ENCODE measurements at regions of chr18 and their contacts with region 1.

Region 1: DNA sequence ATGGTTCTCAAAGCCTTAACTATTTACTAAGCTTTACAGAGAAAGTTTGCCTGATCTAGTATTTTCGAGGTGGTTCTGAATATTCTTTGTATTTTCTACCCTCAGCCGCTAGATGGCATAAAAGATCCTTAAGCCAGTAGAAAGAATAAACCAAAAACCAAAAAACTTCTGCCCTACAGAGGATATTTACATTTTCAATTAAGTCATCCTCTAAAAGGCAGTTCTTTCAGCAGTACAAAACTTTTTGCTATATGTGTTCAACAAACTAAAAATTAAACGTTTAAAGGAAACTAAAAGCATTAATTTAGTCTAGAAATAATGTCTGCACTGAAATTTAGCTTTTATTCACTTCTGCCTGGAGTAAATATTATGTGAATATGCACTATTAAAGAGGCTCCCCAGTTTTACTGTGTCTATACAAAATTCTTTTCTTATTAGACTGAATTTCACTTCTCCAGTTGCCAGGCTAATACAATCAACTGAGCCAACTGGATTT is 297.5 kb downstream of the PIEZO2 start:
- DNase-seq: no peak
- ATAC-seq: no peak
- H3K4me3 ChIP-seq: no peak overlapping the region
- H3K27ac ChIP-seq: no peak overlapping the region
- H3K4me1 ChIP-seq: no peaks in the 10 kb centered on the region
- H3K27me3 ChIP-seq: no peaks in the 10 kb centered on the region

Region 2: GRCh38 chr18:11034884-11035283 is 183.0 kb after region 1 on chr18:
- intact Hi-C with region 1: loop called (anchors 2 to 5 kb)
- DNase-seq: no peak
- ATAC-seq: no peak
- H3K4me3 ChIP-seq: no peak overlapping the region
- H3K27ac ChIP-seq: no peak overlapping the region
- H3K4me1 ChIP-seq: no peaks in the 10 kb centered on the region
- H3K27me3 ChIP-seq: no peaks in the 10 kb centered on the region

Region 3: DNA sequence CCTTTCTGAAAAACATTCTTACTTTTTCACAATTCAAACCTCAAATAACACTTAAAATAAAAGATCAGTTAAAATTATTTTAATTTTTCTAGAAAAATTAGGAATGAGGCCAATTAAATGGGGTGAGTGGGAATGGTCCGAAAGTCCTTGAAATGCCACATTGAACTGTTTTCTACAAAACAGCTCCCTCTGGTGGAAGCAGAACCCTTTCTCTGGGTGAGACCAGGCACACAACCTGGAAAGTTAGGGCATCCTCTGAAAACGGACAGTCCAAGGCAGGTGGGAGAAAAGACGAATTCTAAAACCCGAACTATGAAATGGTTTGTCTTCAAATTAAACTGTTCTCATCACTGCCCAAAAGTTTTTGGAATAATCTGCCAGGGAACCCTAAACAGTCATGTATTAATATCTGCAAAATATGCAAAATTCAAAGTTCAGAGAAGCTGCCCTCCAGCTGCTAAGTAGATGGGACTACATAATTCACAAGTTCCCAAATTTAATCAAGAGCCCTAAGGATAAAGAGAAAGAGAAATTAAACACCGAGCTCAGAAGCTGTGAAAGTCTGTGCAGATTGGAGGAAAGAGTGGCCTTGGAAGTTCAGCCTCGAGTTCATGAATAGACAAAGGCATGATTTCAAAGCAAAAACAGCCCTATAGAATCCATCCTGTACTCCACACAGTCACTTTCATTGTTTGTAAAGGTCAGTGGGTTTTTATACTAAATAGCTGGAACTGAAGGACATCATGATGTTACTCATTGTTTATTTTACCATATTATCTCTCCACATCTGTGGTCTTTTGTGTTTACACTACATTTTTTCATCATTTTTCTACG is 189.2 kb after region 1 on chr18:
- intact Hi-C with region 1: loop called (anchors 2 to 5 kb)
- DNase-seq: no peak
- ATAC-seq: peak in 1 of 2 donors; percentile 68
- H3K4me3 ChIP-seq: no peak overlapping the region
- H3K27ac ChIP-seq: no peak overlapping the region
- H3K4me1 ChIP-seq: no peaks in the 10 kb centered on the region
- H3K27me3 ChIP-seq: no peaks in the 10 kb centered on the region

Region 4: DNA sequence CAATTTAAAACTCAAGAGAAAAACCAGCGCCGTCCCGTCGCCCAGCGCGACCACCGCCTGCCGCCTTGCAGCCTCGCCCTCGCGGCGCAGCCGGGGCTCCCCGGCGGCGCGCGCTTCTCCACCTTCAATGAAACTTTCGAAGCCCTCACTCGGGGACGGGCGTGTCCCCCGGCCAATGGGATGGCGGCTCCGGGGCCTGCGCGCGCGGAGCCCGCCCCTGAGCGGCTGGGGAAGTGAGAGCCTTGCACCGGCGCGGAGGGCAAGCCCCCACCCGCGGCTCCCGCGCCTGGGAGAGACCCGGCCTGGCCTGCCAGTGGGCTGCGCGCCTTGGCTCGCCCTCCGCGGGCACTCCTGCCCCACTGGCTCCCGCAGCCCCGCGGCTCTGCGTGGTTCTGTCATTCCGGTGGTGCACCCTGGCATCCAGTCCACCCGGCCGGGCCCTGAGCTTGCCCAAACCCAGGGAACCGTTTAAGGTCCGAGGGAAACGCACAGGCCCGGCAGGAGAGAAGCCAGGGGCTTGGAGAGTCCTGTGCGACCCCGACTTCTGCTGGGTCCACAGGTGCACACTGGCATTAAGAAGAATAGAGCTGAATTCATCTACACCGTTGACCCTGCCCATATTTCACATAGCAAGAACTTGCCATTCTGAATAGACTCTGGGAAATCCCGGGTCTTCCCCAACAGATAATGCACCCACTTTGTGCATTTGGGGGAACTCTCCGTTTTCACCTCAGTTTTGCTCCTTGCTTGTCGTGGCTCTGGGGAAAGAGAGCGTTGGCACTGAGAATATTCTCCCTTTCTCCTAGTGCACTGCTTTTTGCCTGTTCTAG is 297.8 kb after region 1 on chr18 and contains the start of gene PIEZO2:
- intact Hi-C with region 1: loop called (anchors 5 to 10 kb)
- DNase-seq: peak; percentile 65 to 87 (median 86)
- ATAC-seq: peak; percentile 85 to 88
- H3K4me3 ChIP-seq: peak within 1 kb of the TSS; percentile 43
- H3K27ac ChIP-seq: no peak within 1 kb of the TSS
- H3K4me1 ChIP-seq: no peaks in the 10 kb centered on the region
- H3K27me3 ChIP-seq: no peaks in the 10 kb centered on the region
- total RNA-seq, gene PIEZO2: 0.54 to 0.93 (median 0.65) TPM

Region 5: DNA sequence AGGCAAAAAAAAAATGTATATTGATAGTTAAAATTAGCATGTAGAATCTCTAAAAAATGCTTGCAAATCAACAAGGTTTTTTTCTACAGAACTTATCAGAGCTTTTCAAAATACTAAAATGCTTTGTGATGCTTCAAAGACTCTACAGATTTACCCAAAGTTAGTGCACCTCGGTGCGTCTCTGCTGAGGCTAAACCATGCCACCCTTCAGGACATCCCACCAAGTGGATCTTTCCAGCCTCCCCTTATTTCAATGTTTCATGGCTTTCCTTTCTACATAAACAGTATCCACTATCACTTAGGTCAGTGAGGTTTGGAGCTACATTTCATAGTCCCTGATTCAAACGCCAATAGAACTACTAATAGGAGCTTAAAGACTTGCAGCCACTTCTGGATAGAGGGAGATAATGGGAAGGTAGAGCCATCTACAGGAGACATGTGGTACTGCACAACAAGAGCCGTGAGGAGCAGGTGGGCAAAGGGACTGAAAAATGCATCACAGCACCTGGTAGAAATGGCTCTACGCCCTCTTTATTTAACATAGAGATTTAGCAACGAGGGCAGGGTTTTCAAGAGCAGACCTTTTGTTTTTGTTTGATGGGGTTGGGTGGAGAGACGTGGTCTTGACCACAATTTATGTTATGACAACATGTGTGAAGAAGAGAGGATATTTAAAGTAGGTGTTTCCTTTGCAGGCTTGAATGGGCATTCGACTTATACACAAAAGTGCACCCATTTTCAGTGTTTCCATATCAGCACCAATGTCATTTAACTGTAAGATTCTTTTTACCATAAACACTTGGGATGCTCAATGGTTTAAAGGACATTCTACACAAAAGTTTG is 701.4 kb after region 1 on chr18:
- intact Hi-C with region 1: loop called in 3 of 4 experiments (anchors 5 to 10 kb)
- DNase-seq: no peak
- ATAC-seq: peak; percentile 53 to 60
- H3K4me3 ChIP-seq: no peak overlapping the region
- H3K27ac ChIP-seq: no peak overlapping the region
- H3K4me1 ChIP-seq: no peaks in the 10 kb centered on the region
- H3K27me3 ChIP-seq: no peaks in the 10 kb centered on the region